Calu3 (cell line): ENCODE measurements at regions of chr12 and their contacts with region 1.

Region 1: GRCh38 chr12:100229058-100229637 is 28.5 kb downstream of the ACTR6 start:
- DNase-seq: peak; percentile 24
- H3K4me3 Mint-ChIP-seq: peak overlapping the region; percentile 19
- H3K27ac Mint-ChIP-seq: peak overlapping the region; percentile 55
- H3K4me1 Mint-ChIP-seq: peaks cover 20% of the 10 kb centered on the region
- H3K27me3 Mint-ChIP-seq: no peaks in the 10 kb centered on the region
- CTCF ChIP-seq: no peak

Region 2: GRCh38 chr12:99824900-99825542 is 404.1 kb before region 1 on chr12:
- CTCF ChIA-PET with region 1: no interaction called
- intact Hi-C with region 1: no loop called
- DNase-seq: no peak
- H3K4me3 Mint-ChIP-seq: no peak overlapping the region
- H3K27ac Mint-ChIP-seq: no peak overlapping the region
- H3K4me1 Mint-ChIP-seq: no peaks in the 10 kb centered on the region
- H3K27me3 Mint-ChIP-seq: no peaks in the 10 kb centered on the region
- CTCF ChIP-seq: no peak

Region 3: DNA sequence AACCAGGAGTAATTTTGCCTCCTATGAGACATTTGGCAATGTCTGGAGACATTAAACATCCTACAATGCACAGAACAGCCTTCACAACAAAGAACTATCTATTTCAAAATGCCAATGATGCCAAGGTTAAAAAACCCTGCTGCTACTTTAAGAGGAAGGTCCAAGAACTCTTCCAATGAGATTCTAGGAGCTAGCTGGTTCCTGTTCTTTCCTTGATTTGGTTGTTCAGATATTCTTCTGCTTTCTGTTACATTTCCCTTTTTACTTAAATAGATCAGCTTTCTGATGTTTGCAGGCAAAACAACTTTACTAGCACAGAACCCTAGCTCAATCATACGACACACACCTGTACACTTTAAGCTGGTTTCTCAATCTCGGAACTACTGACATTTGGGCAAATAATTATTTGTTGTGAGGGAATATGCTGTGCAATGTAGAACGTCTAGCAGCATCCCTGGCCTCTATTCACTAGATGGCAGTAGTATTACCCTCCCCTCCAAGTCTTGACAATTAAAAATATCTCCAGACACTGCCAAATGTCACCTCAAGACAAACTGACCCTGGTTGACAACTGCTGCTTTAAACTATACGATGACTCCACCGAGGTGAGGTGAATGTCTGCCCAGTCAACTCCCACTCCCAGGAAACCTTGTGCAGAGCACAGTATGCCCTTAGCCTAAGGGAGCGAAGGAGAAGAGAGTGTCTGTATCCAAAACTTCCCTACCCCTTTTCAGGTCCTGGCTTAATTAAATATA is 90.9 kb before region 1 on chr12:
- CTCF ChIA-PET with region 1: interaction called, 15 read pairs
- intact Hi-C with region 1: no loop called
- DNase-seq: no peak
- H3K4me3 Mint-ChIP-seq: no peak overlapping the region
- H3K27ac Mint-ChIP-seq: no peak overlapping the region
- H3K4me1 Mint-ChIP-seq: peaks cover 20% of the 10 kb centered on the region
- H3K27me3 Mint-ChIP-seq: no peaks in the 10 kb centered on the region
- CTCF ChIP-seq: peak; percentile 24

Region 4: GRCh38 chr12:100163416-100164152 is 65.6 kb before region 1 on chr12:
- CTCF ChIA-PET with region 1: interaction called, 11 read pairs
- intact Hi-C with region 1: no loop called
- DNase-seq: peak; percentile 88
- H3K4me3 Mint-ChIP-seq: peak overlapping the region; percentile 65
- H3K27ac Mint-ChIP-seq: peak overlapping the region; percentile 14
- H3K4me1 Mint-ChIP-seq: peaks cover 13% of the 10 kb centered on the region
- H3K27me3 Mint-ChIP-seq: no peaks in the 10 kb centered on the region
- CTCF ChIP-seq: no peak